Activated T-helper 2 cell treated with anti-CD3 and anti-CD28 coated beads, Interferon-gamma antibody, Interleukin-2, Interleukin-4, amounts not matched to agents 10 μg/mL and 5 μg/mL and 100 μg/mL, durations not matched to agents 14 hours and 24 hours and 36 hours (primary cell): ENCODE measurements at regions of chr9 and their contacts with region 1.

Region 1: GRCh38 chr9:133335878-133336811 is at the start of gene SURF6:
- DNase-seq: peak; percentile 93
- H3K4me3 Mint-ChIP-seq: peak within 1 kb of the TSS; percentile 94
- H3K27ac Mint-ChIP-seq: peak within 1 kb of the TSS; percentile 89
- H3K4me1 Mint-ChIP-seq: peaks cover 17% of the 10 kb centered on the region
- H3K27me3 Mint-ChIP-seq: no peaks in the 10 kb centered on the region
- total RNA-seq, gene SURF6: 23.0 and 24.4 TPM in 2 replicates

Region 2: DNA sequence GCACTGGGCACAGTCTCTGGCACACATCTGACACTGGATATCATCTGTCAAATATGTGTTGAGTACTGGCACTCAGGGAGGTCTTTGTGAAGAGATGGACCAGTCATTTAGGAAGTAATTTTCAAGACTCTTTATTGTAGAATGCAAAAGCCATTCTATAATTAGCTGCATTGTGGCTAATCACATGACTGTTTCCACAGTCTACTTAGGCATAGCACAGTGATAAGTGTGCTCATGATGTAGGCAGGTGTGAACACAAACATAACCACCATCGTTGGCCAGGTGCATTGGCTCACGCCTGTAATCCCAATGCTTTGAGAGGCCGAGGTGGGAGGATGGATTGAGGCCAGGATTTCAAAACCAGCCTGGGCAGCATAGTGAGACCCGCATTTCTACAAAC is 863.9 kb before region 1 on chr9:
- intact Hi-C with region 1: no loop called
- DNase-seq: no peak
- H3K4me3 Mint-ChIP-seq: no peak overlapping the region
- H3K27ac Mint-ChIP-seq: no peak overlapping the region
- H3K4me1 Mint-ChIP-seq: no peaks in the 10 kb centered on the region
- H3K27me3 Mint-ChIP-seq: peaks cover 9% of the 10 kb centered on the region

Region 3: DNA sequence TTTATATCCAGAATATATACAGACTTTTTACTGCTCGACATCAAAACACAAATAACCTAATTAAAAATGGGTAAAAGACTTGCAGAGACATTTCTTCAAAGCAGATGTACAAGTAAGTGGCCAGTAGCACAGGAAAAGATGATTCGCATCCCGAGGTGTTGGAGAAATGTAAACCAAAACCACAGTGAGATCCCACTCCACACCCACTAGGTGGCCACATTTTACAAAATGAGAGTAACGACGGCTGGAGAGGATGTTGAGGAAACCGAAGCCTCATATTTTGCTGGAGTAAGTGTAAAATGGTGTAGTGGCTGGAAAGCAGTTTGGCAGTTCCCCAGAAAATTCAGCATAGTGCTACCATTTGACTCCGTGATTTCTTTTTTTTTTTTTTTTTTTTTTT is 151.2 kb before region 1 on chr9:
- intact Hi-C with region 1: loop called (anchors 10 kb)
- DNase-seq: peak; percentile 36
- H3K4me3 Mint-ChIP-seq: no peak overlapping the region
- H3K27ac Mint-ChIP-seq: no peak overlapping the region
- H3K4me1 Mint-ChIP-seq: peaks cover 27% of the 10 kb centered on the region
- H3K27me3 Mint-ChIP-seq: peaks cover 33% of the 10 kb centered on the region

Region 4: DNA sequence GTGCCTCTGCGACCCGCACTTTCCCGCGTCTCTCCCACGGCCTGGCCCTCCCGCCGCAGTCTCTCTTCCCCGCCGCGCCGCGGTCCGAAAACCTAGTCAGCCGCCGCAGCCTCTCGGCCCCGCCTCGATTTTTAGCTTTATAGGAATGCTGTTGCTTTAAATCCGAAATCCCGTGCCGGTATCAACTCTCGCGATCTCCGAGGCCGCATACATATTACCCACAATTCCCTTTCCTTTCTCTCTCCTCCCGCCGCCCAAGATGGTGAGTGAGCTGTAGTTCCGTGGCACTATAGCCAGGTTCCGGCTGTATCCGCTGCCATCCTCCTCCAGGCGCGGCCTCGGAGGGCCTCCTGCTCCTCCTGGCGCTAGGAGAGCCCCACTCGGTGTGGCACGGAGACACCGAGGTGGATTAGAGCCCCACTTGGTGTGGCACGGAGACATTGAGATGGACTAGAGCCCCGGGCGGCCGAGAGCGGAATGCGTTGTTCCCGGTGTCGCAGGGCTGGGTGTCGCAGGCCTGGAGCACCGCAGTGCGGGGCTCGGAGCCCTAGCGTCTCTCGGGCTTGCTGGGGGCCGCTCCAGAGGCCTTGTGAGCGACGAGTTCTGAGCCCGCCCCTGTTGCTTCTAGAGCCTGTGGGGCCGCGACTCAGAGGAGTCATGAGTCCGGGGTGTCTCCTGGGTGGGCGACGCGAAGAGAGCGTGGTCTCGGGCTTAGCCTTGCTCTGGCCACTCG is 12.0 kb after region 1 on chr9 and contains the starts of genes MED22 and RPL7A:
- intact Hi-C with region 1: loop called (anchors 1 kb)
- DNase-seq: peak; percentile 91
- H3K4me3 Mint-ChIP-seq: peak within 1 kb of the TSS; percentile 98
- H3K27ac Mint-ChIP-seq: peak within 1 kb of the TSS; percentile 96
- H3K4me1 Mint-ChIP-seq: peaks cover 33% of the 10 kb centered on the region
- H3K27me3 Mint-ChIP-seq: no peaks in the 10 kb centered on the region
- total RNA-seq, gene MED22: 35.2 and 36.4 TPM in 2 replicates
- total RNA-seq, gene RPL7A: 2,586 and 2,588 TPM in 2 replicates

Region 5: GRCh38 chr9:133356391-133357091 is 20.4 kb after region 1 on chr9 and contains the starts of genes SURF1 and SURF2:
- intact Hi-C with region 1: loop called (anchors 2 kb)
- DNase-seq: peak; percentile 88
- H3K4me3 Mint-ChIP-seq: peak within 1 kb of the TSS; percentile 88
- H3K27ac Mint-ChIP-seq: peak within 1 kb of the TSS; percentile 74
- H3K4me1 Mint-ChIP-seq: peaks cover 41% of the 10 kb centered on the region
- H3K27me3 Mint-ChIP-seq: no peaks in the 10 kb centered on the region
- total RNA-seq, gene SURF1: 32.4 and 33.0 TPM in 2 replicates
- total RNA-seq, gene SURF2: 16.9 and 22.1 TPM in 2 replicates